ENCODE measurements at regions of chr4 and their contacts with region 1.

Region 1: GRCh38 chr4:68271851-68272756 is 26.6 kb upstream of the TMPRSS11B start:
- DNase-seq: peak; percentile 44
- CTCF ChIP-seq: peak; percentile 59

Region 2: GRCh38 chr4:68257719-68258118 is 14.4 kb before region 1 on chr4:
- CTCF ChIA-PET with region 1: interaction called, 19 read pairs
- POLR2A ChIA-PET with region 1: no interaction called
- DNase-seq: no peak
- CTCF ChIP-seq: no peak

Region 3: GRCh38 chr4:68375667-68376559 is 103.8 kb after region 1 on chr4:
- CTCF ChIA-PET with region 1: interaction called, 38 read pairs
- POLR2A ChIA-PET with region 1: no interaction called
- DNase-seq: peak; percentile 55
- CTCF ChIP-seq: peak; percentile 68

Measured in GM10248 (cell line).